Right cardiac atrium (tissue), 5 donors: ENCODE measurements at regions of chr12 and their contacts with region 1.

Region 1: GRCh38 chr12:67222302-67222701 is 46.9 kb upstream of the CAND1 start:
- DNase-seq: no peak
- ATAC-seq: no peak
- H3K4me3 ChIP-seq: no peak overlapping the region
- H3K27ac ChIP-seq: no peak overlapping the region
- H3K4me1 ChIP-seq: no peaks in the 10 kb centered on the region
- H3K27me3 ChIP-seq: no peaks in the 10 kb centered on the region

Region 2: GRCh38 chr12:66500841-66501240 is 721.5 kb before region 1 on chr12:
- intact Hi-C with region 1: no loop called
- DNase-seq: no peak
- ATAC-seq: no peak
- H3K4me3 ChIP-seq: no peak overlapping the region
- H3K27ac ChIP-seq: no peak overlapping the region
- H3K4me1 ChIP-seq: no peaks in the 10 kb centered on the region
- H3K27me3 ChIP-seq: no peaks in the 10 kb centered on the region

Region 3: GRCh38 chr12:67025543-67026114 is 196.7 kb before region 1 on chr12:
- intact Hi-C with region 1: loop called in 1 of 4 experiments (anchors 10 kb)
- DNase-seq: no peak
- ATAC-seq: no peak
- H3K4me3 ChIP-seq: no peak overlapping the region
- H3K27ac ChIP-seq: no peak overlapping the region
- H3K4me1 ChIP-seq: peaks cover 2% of the 10 kb centered on the region
- H3K27me3 ChIP-seq: no peaks in the 10 kb centered on the region

Region 4: GRCh38 chr12:67161322-67161918 is 60.9 kb before region 1 on chr12:
- intact Hi-C with region 1: loop called in 2 of 4 experiments (anchors 5 kb)
- DNase-seq: peak in 1 of 3 donors; percentile 18
- ATAC-seq: peak; percentile 40
- H3K4me3 ChIP-seq: no peak overlapping the region
- H3K27ac ChIP-seq: no peak overlapping the region
- H3K4me1 ChIP-seq: no peaks in the 10 kb centered on the region
- H3K27me3 ChIP-seq: no peaks in the 10 kb centered on the region